ENCODE measurements at regions of chr7 and their contacts with region 1.

Region 1: DNA sequence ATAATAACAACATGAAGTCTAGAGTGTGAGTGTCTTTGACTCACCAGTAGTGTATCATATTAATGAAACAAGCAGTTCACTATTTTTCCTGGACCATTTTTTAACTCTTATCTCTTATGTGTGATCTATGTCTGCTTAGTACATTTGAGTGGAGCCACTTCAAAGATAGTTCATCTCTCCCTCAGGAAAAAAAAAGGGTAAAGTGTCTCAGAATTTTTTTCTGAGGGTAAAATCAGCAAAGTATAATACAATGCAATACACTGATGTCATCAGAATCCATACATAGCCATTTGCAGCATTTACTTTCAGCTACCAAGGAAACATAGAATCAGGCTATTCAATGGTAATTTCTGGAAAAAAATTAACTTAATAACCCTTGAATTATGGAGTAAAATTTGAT is 706.7 kb downstream of the DNAJB9 start:
- DNase-seq: no peak
- ATAC-seq: no peak
- H3K4me3 ChIP-seq: no peak overlapping the region
- H3K27ac ChIP-seq: no peak overlapping the region
- H3K4me1 ChIP-seq: no peaks in the 10 kb centered on the region
- H3K27me3 ChIP-seq: no peaks in the 10 kb centered on the region
- CTCF ChIP-seq: no peak
- POLR2A ChIP-seq: no peak
- RAD21 ChIP-seq: no peak

Region 2: GRCh38 chr7:109215341-109215740 is 61.0 kb before region 1 on chr7:
- CTCF ChIA-PET with region 1: no interaction called
- POLR2A ChIA-PET with region 1: no interaction called
- dilution Hi-C with region 1: no loop called
- in situ Hi-C with region 1: no loop called
- intact Hi-C with region 1: loop called (anchors 5 kb)
- DNase-seq: no peak
- ATAC-seq: no peak
- H3K4me3 ChIP-seq: no peak overlapping the region
- H3K27ac ChIP-seq: no peak overlapping the region
- H3K4me1 ChIP-seq: no peaks in the 10 kb centered on the region
- H3K27me3 ChIP-seq: no peaks in the 10 kb centered on the region
- CTCF ChIP-seq: no peak
- POLR2A ChIP-seq: no peak
- RAD21 ChIP-seq: no peak